MCF 10A (cell line): ENCODE measurements at regions of chr1 and their contacts with region 1.

Region 1: GRCh38 chr1:234957330-234958065 is 171.1 kb downstream of the TOMM20 start:
- DNase-seq: peak; percentile 96
- H3K4me3 Mint-ChIP-seq: no peak overlapping the region
- H3K27ac Mint-ChIP-seq: peak overlapping the region; percentile 30
- H3K4me1 Mint-ChIP-seq: peaks cover 25% of the 10 kb centered on the region
- H3K27me3 Mint-ChIP-seq: no peaks in the 10 kb centered on the region
- CTCF ChIP-seq: no peak

Region 2: GRCh38 chr1:234326497-234327366 is 630.8 kb before region 1 on chr1:
- CTCF ChIA-PET with region 1: no interaction called
- POLR2A ChIA-PET with region 1: no interaction called
- intact Hi-C with region 1: no loop called
- DNase-seq: peak; percentile 82
- H3K4me3 Mint-ChIP-seq: no peak overlapping the region
- H3K27ac Mint-ChIP-seq: no peak overlapping the region
- H3K4me1 Mint-ChIP-seq: peaks cover 6% of the 10 kb centered on the region
- H3K27me3 Mint-ChIP-seq: peaks cover 14% of the 10 kb centered on the region
- CTCF ChIP-seq: peak; percentile 84

Region 3: DNA sequence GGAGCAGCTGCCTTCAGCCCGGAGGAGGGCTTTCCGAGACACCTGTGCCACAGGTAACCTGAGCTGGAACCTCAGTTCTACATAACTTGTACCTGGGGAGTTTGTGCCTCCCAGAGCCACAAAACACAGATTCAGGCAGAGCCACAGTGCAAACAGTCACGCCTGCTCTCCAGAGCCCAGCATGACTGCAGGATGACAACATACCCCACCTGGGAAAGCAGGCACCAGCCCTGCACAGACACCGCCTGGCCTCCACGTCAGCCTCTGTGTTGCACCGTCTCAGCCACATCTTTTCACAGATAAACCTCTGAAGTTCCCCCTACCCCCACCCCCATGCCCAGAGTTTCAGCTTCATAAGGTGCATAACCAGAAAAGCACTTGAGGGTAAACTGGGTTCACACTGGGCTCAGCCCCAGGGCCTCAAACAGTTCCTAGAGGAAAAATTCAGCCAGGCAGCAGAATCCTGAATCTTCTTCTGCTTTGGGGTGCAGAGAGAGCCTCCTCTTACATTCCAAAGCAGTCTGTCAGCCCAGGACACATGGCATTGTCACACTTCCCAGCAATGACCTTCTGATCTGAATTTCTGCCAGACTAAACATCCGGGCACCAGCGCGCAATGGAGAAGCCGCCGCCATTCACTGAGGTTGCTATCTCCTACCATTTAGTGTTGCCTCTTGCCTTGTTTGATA is 58.3 kb before region 1 on chr1:
- CTCF ChIA-PET with region 1: no interaction called
- POLR2A ChIA-PET with region 1: no interaction called
- intact Hi-C with region 1: no loop called
- DNase-seq: peak; percentile 46
- H3K4me3 Mint-ChIP-seq: no peak overlapping the region
- H3K27ac Mint-ChIP-seq: no peak overlapping the region
- H3K4me1 Mint-ChIP-seq: peaks cover 6% of the 10 kb centered on the region
- H3K27me3 Mint-ChIP-seq: no peaks in the 10 kb centered on the region
- CTCF ChIP-seq: no peak

Region 4: DNA sequence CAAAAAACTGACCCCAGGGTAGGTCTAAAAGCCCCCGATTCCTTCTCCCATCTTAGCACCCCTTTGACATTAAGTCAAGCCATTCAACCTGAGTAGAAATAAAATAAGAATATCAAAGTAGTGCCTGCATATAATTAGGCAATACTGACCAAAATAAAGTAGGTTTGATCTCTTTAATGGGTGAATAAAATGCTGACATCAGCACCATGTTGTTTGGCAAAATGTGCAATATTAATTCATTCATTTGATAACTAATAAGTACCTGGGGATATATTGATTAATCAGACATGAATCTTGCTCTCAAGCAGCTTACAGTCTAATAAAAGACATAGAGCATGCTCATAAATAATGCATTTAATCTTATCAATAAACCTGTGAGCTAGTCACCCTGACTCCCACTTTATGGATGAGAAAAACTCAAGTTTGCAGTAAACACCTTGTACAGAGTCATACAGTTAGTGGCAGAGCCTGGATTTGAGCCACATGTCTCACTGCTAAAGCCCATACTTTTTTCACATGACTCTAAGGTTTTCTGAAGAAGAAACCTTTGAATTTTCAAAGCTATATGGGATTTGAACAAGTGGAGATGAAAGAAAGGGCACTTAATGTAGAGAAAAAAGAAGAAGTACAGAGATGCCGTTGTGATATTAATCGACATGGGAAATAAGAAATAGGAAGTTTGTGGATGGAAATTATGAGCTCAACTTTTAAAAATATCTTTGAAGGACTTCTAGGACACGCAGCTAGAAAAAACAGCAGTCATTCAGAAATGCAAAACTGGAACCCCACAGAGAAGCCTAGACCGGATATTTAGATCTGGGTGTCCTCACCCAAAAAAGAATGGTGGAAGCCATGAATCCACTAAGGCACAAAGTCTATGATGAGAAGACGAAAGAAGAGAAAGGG is 12.8 kb before region 1 on chr1:
- CTCF ChIA-PET with region 1: interaction called, 3 read pairs
- POLR2A ChIA-PET with region 1: interaction called, 10 read pairs
- intact Hi-C with region 1: no loop called
- DNase-seq: no peak
- H3K4me3 Mint-ChIP-seq: no peak overlapping the region
- H3K27ac Mint-ChIP-seq: no peak overlapping the region
- H3K4me1 Mint-ChIP-seq: no peaks in the 10 kb centered on the region
- H3K27me3 Mint-ChIP-seq: no peaks in the 10 kb centered on the region
- CTCF ChIP-seq: no peak

Region 5: GRCh38 chr1:235105051-235106043 is 147.8 kb after region 1 on chr1:
- CTCF ChIA-PET with region 1: no interaction called
- POLR2A ChIA-PET with region 1: no interaction called
- intact Hi-C with region 1: no loop called
- DNase-seq: peak; percentile 51
- H3K4me3 Mint-ChIP-seq: peak overlapping the region; percentile 59
- H3K27ac Mint-ChIP-seq: peak overlapping the region; percentile 33
- H3K4me1 Mint-ChIP-seq: peaks cover 29% of the 10 kb centered on the region
- H3K27me3 Mint-ChIP-seq: no peaks in the 10 kb centered on the region
- CTCF ChIP-seq: no peak

Region 6: DNA sequence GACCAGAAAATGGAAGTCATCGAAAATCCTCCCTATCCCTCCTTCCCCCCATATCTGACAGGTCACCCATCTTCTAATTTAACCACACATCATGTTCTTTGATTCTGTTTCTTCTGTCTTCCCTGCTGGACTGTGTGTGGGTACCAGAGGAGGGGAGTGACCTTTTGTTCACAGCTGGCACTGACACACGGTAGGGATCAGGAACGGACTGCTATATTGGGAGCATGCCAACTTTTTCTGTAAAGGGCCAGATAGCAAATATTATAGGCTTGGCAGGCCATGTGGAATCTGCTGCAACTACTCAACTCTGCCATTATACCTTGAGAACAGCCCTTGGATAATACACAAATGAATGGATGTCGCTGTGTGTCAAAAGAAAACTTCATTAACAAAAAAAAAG is 178.6 kb after region 1 on chr1:
- CTCF ChIA-PET with region 1: no interaction called
- POLR2A ChIA-PET with region 1: no interaction called
- intact Hi-C with region 1: no loop called
- DNase-seq: no peak
- H3K4me3 Mint-ChIP-seq: no peak overlapping the region
- H3K27ac Mint-ChIP-seq: no peak overlapping the region
- H3K4me1 Mint-ChIP-seq: no peaks in the 10 kb centered on the region
- H3K27me3 Mint-ChIP-seq: no peaks in the 10 kb centered on the region
- CTCF ChIP-seq: no peak